IMR-90 (cell line): ENCODE measurements at regions of chr1 and their contacts with region 1.

Region 1: DNA sequence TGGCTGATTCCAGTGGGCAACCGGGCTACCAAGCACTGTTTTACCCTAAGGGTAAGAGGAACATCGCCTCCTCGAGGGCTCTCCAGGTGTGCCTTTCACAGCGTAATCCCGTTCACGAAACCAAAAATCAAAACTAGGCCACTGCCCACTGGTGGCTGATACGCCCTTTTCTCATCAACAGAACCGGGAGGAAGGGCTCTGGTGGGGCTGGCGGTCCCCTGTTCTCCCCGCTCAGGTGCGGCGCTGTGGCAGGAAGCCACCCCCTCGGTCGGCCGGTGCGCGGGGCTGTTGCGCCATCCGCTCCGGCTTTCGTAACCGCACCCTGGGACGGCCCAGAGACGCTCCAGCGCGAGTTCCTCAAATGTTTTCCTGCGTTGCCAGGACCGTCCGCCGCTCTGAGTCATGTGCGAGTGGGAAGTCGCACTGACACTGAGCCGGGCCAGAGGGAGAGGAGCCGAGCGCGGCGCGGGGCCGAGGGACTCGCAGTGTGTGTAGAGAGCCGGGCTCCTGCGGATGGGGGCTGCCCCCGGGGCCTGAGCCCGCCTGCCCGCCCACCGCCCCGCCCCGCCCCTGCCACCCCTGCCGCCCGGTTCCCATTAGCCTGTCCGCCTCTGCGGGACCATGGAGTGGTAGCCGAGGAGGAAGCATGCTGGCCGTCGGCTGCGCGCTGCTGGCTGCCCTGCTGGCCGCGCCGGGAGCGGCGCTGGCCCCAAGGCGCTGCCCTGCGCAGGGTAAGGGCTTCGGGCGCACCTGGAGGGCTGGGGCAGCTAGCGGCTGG is at the start of gene IL6R:
- DNase-seq: peak; percentile 93
- ATAC-seq: peak; percentile 80
- H3K4me3 ChIP-seq: peak within 1 kb of the TSS; percentile 72
- H3K27ac ChIP-seq: peak within 1 kb of the TSS; percentile 88
- H3K4me1 ChIP-seq: peaks cover 21% of the 10 kb centered on the region
- H3K27me3 ChIP-seq: peaks cover 12% of the 10 kb centered on the region
- CTCF ChIP-seq: peak; percentile 42
- POLR2A ChIP-seq: peak; percentile 91
- RAD21 ChIP-seq: peak; percentile 48
- total RNA-seq, gene IL6R: 6.1 and 9.5 TPM in 2 replicates

Region 2: GRCh38 chr1:153670859-153671627 is 734.1 kb before region 1 on chr1 and contains the start of gene ILF2:
- CTCF ChIA-PET with region 1: no interaction called
- POLR2A ChIA-PET with region 1: no interaction called
- dilution Hi-C with region 1: no loop called
- in situ Hi-C with region 1: no loop called
- intact Hi-C with region 1: loop called (anchors 5 kb)
- DNase-seq: peak; percentile 100
- ATAC-seq: peak; percentile 93
- H3K4me3 ChIP-seq: peak within 1 kb of the TSS; percentile 65
- H3K27ac ChIP-seq: peak within 1 kb of the TSS; percentile 61
- H3K4me1 ChIP-seq: peaks cover 1% of the 10 kb centered on the region; the same call in 1 of the 2 replicates
- H3K27me3 ChIP-seq: no peaks in the 10 kb centered on the region
- CTCF ChIP-seq: peak; percentile 37
- POLR2A ChIP-seq: peak; percentile 97
- RAD21 ChIP-seq: no peak
- total RNA-seq, gene ILF2: 405 and 504 TPM in 2 replicates

Region 3: DNA sequence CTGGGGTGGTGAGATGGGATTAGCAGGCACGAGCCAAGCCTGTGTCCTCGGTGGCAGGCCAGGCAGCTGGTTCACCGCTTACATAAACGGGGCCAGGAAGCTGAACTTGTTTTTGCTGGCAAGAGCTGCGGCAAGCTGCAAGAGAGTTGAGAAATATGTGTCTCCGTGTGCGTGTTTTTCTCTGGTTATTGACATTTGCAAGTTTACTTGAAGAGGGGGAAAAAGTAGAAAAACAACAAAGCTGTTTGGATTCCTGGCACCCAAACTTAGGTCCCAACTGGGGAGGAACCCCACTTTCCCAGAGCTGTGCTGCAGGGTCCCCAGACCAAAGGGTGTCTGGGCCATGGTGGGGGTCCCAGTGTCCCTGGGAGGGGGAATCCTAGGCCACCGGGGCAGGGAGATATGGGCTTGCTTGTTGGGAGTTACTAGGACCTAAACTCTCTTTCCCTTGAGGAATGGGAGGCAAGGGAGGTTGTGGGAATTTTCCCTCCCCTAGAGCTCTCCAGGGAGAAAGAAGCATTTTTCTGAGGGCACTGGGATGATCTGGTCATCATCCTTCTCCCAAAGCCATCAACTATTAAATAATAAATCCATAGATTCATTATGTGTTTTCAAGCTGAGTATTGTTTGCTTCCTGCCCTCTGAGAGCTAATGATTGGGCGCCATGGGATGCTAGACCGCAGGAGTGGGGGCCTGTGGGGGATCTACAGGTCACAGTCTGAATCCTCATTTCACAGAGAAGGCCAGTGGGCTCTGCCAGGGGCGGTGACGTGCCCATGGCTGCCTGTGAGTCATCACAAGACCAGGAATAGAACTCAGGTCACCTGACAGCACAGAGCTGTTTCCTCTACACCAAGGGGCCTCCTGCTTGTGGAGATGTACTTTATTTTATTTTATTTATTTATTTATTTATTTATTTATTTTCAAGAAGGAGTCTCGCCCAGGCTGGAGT is 14.7 kb after region 1 on chr1:
- CTCF ChIA-PET with region 1: interaction called, 9 read pairs
- POLR2A ChIA-PET with region 1: no interaction called
- dilution Hi-C with region 1: no loop called
- in situ Hi-C with region 1: no loop called
- intact Hi-C with region 1: loop called (anchors 1 kb)
- DNase-seq: peak; percentile 95
- ATAC-seq: peak; percentile 72
- H3K4me3 ChIP-seq: no peak overlapping the region
- H3K27ac ChIP-seq: peak overlapping the region; percentile 96
- H3K4me1 ChIP-seq: peaks cover 44% of the 10 kb centered on the region
- H3K27me3 ChIP-seq: no peaks in the 10 kb centered on the region
- CTCF ChIP-seq: no peak
- POLR2A ChIP-seq: no peak
- RAD21 ChIP-seq: peak; percentile 19; the same call in 1 of the 2 replicates

Region 4: GRCh38 chr1:154442006-154442740 is 37.0 kb after region 1 on chr1:
- CTCF ChIA-PET with region 1: no interaction called
- POLR2A ChIA-PET with region 1: no interaction called
- dilution Hi-C with region 1: no loop called
- in situ Hi-C with region 1: no loop called
- intact Hi-C with region 1: loop called (anchors 1 kb)
- DNase-seq: peak; percentile 64
- ATAC-seq: peak; percentile 5; the same call in 1 of the 2 replicates
- H3K4me3 ChIP-seq: no peak overlapping the region
- H3K27ac ChIP-seq: no peak overlapping the region
- H3K4me1 ChIP-seq: peaks cover 23% of the 10 kb centered on the region
- H3K27me3 ChIP-seq: peaks cover 17% of the 10 kb centered on the region
- CTCF ChIP-seq: 0 out of 2 replicates have a peak, but pooled peaks have one; percentile 22
- POLR2A ChIP-seq: no peak
- RAD21 ChIP-seq: no peak

Region 5: DNA sequence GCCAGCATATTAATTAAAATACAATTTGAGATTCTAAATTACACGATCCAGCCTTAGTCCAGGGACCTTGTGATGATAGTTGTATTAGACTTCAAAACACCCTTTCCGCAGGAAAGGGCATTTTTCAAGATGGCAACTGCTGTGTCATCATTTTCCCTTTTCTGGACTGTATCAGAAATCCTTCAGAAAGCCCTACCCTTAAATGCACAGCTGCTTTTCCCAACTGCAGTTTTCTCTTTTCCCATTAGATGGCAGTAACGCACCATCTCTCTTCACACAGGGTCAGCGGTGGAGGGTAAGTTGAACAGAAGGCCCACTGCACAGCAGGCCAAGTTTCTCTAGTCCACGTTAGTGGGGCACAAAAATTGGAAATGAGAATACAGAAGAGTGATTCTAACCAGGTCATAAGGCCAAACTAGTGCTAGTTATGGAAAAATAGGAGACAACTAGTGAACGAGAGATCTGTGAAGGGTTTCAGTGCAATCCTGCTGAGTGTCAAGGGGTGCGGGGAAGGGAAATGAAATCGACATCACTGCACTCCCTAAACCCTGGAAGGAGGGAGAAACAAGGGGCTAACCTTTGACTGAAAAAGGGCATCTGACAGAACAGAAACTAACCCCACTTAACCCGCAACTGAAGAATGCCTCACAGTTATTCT is 74.7 kb after region 1 on chr1:
- CTCF ChIA-PET with region 1: interaction called, 3 read pairs
- POLR2A ChIA-PET with region 1: no interaction called
- dilution Hi-C with region 1: no loop called
- in situ Hi-C with region 1: no loop called
- intact Hi-C with region 1: loop called (anchors 2 kb)
- DNase-seq: peak; percentile 85
- ATAC-seq: peak; percentile 93
- H3K4me3 ChIP-seq: no peak overlapping the region
- H3K27ac ChIP-seq: no peak overlapping the region
- H3K4me1 ChIP-seq: peaks cover 3% of the 10 kb centered on the region
- H3K27me3 ChIP-seq: peaks cover 5% of the 10 kb centered on the region; the same call in 1 of the 2 replicates
- CTCF ChIP-seq: peak; percentile 98
- POLR2A ChIP-seq: peak; percentile 40; the same call in 1 of the 2 replicates
- RAD21 ChIP-seq: peak; percentile 93